Activated CD4-positive, alpha-beta T cell treated with anti-CD3 and anti-CD28 coated beads for 36 hours (primary cell): ENCODE measurements at regions of chr12 and their contacts with region 1.

Region 1: GRCh38 chr12:122123051-122123760 is 44.6 kb downstream of the MLXIP start:
- DNase-seq: peak; percentile 84
- ATAC-seq: peak; percentile 81
- H3K4me3 Mint-ChIP-seq: no peak overlapping the region
- H3K27ac Mint-ChIP-seq: peak overlapping the region; percentile 85
- H3K4me1 Mint-ChIP-seq: peaks cover 34% of the 10 kb centered on the region
- H3K27me3 Mint-ChIP-seq: no peaks in the 10 kb centered on the region

Region 2: GRCh38 chr12:122064025-122064777 is 59.0 kb before region 1 on chr12:
- CTCF ChIA-PET with region 1: interaction called, 14 read pairs
- POLR2A ChIA-PET with region 1: no interaction called
- intact Hi-C with region 1: no loop called
- DNase-seq: peak; percentile 65
- ATAC-seq: peak; percentile 98
- H3K4me3 Mint-ChIP-seq: no peak overlapping the region
- H3K27ac Mint-ChIP-seq: no peak overlapping the region
- H3K4me1 Mint-ChIP-seq: peaks cover 15% of the 10 kb centered on the region
- H3K27me3 Mint-ChIP-seq: no peaks in the 10 kb centered on the region

Region 3: GRCh38 chr12:122449353-122449752 is 326.1 kb after region 1 on chr12:
- CTCF ChIA-PET with region 1: no interaction called
- POLR2A ChIA-PET with region 1: no interaction called
- intact Hi-C with region 1: no loop called
- DNase-seq: peak; percentile 35
- ATAC-seq: peak; percentile 55
- H3K4me3 Mint-ChIP-seq: no peak overlapping the region
- H3K27ac Mint-ChIP-seq: no peak overlapping the region
- H3K4me1 Mint-ChIP-seq: peaks cover 28% of the 10 kb centered on the region
- H3K27me3 Mint-ChIP-seq: no peaks in the 10 kb centered on the region